CD4-positive, alpha-beta T cell (primary cell): ENCODE measurements at regions of chr14 and their contacts with region 1.

Region 1: DNA sequence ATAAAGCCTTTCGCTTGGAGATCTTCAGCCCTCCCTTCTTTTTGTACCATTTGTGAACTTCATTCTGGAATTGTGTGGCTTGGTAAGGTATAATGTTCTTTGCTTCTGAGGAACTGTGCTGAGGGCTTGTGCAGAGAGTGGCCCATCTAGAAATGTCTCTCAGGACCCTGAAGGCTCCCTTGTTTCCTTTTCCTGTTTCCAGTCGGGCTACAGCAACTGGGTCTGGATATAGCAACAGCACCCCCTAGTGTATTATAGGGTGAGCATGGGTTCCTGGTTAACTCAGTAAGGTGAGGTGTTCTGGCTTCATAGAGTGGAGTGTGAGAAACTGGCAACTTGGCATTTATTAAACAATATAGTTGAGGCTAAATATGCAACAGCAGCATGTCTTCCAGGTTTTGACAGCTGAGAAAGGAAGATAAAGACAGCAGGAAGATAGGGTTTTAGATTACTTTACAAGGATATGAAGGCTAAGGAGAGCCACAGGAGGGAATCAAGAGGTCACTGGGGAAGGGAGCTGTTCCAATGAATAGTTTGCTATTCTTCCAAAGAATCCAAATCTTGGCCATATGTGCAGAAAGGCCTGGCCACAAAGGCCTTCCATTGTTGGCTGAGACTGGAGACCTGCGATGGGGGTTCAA is 49.1 kb upstream of the RNU6-8 start:
- DNase-seq: peak in 13 of 14 experiments; percentile 2 to 80 (median 25)
- ATAC-seq: peak; percentile 94
- H3K4me3 ChIP-seq: no peak overlapping the region
- H3K4me3 Mint-ChIP-seq: no peak overlapping the region
- H3K27ac ChIP-seq: no peak overlapping the region
- H3K27ac Mint-ChIP-seq: no peak overlapping the region
- H3K4me1 ChIP-seq: peaks cover 2% of the 10 kb centered on the region
- H3K4me1 Mint-ChIP-seq: no peaks in the 10 kb centered on the region
- H3K27me3 ChIP-seq: no peaks in the 10 kb centered on the region
- H3K27me3 Mint-ChIP-seq: no peaks in the 10 kb centered on the region
- CTCF ChIP-seq: peak; percentile 92

Region 2: GRCh38 chr14:31510222-31510621 is 741.9 kb before region 1 on chr14:
- CTCF ChIA-PET with region 1: interaction called, 6 read pairs
- POLR2A ChIA-PET with region 1: no interaction called
- intact Hi-C with region 1: loop called (anchors 1 to 2 kb)
- DNase-seq: peak in 3 of 14 experiments; percentile 29 to 36 (median 29)
- ATAC-seq: no peak
- H3K4me3 ChIP-seq: no peak overlapping the region
- H3K4me3 Mint-ChIP-seq: no peak overlapping the region
- H3K27ac ChIP-seq: no peak overlapping the region
- H3K27ac Mint-ChIP-seq: no peak overlapping the region
- H3K4me1 ChIP-seq: no peaks in the 10 kb centered on the region
- H3K4me1 Mint-ChIP-seq: no peaks in the 10 kb centered on the region
- H3K27me3 ChIP-seq: no peaks in the 10 kb centered on the region
- H3K27me3 Mint-ChIP-seq: no peaks in the 10 kb centered on the region
- CTCF ChIP-seq: peak; percentile 73

Region 3: DNA sequence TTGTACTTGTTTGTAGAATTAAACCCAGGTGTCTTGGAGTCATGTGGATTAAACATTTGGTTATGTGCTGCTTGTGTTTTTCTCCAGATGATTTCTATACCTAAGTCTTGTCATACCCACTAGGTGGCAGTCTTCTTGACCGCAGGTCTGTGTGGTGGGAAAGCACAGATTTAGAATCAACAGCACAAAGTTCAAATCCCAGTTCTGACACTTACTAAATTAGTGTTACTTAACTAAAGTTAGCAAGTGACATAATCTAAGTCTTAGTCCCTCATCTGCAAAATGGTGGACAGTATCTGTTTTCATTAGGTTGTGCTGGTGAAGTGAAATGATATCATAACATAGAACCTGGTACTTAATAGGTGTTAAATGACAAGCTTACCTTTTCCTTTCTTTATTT is 326.0 kb before region 1 on chr14:
- CTCF ChIA-PET with region 1: interaction called, 8 read pairs
- POLR2A ChIA-PET with region 1: interaction called, 4 read pairs
- intact Hi-C with region 1: loop called (anchors 1 to 2 kb)
- DNase-seq: peak in 4 of 14 experiments; percentile 23 to 66 (median 64)
- ATAC-seq: peak; percentile 43
- H3K4me3 ChIP-seq: no peak overlapping the region
- H3K4me3 Mint-ChIP-seq: no peak overlapping the region
- H3K27ac ChIP-seq: no peak overlapping the region
- H3K27ac Mint-ChIP-seq: no peak overlapping the region
- H3K4me1 ChIP-seq: no peaks in the 10 kb centered on the region
- H3K4me1 Mint-ChIP-seq: peaks cover 11% of the 10 kb centered on the region
- H3K27me3 ChIP-seq: no peaks in the 10 kb centered on the region
- H3K27me3 Mint-ChIP-seq: no peaks in the 10 kb centered on the region
- CTCF ChIP-seq: peak; percentile 64

Region 4: GRCh38 chr14:32070282-32070681 is 181.9 kb before region 1 on chr14:
- CTCF ChIA-PET with region 1: interaction called, 41 read pairs
- POLR2A ChIA-PET with region 1: interaction called, 8 read pairs
- intact Hi-C with region 1: loop called (anchors 1 kb)
- DNase-seq: no peak
- ATAC-seq: no peak
- H3K4me3 ChIP-seq: no peak overlapping the region
- H3K4me3 Mint-ChIP-seq: no peak overlapping the region
- H3K27ac ChIP-seq: no peak overlapping the region
- H3K27ac Mint-ChIP-seq: no peak overlapping the region
- H3K4me1 ChIP-seq: no peaks in the 10 kb centered on the region
- H3K4me1 Mint-ChIP-seq: peaks cover 7% of the 10 kb centered on the region
- H3K27me3 ChIP-seq: no peaks in the 10 kb centered on the region
- H3K27me3 Mint-ChIP-seq: peaks cover 4% of the 10 kb centered on the region
- CTCF ChIP-seq: no peak

Region 5: DNA sequence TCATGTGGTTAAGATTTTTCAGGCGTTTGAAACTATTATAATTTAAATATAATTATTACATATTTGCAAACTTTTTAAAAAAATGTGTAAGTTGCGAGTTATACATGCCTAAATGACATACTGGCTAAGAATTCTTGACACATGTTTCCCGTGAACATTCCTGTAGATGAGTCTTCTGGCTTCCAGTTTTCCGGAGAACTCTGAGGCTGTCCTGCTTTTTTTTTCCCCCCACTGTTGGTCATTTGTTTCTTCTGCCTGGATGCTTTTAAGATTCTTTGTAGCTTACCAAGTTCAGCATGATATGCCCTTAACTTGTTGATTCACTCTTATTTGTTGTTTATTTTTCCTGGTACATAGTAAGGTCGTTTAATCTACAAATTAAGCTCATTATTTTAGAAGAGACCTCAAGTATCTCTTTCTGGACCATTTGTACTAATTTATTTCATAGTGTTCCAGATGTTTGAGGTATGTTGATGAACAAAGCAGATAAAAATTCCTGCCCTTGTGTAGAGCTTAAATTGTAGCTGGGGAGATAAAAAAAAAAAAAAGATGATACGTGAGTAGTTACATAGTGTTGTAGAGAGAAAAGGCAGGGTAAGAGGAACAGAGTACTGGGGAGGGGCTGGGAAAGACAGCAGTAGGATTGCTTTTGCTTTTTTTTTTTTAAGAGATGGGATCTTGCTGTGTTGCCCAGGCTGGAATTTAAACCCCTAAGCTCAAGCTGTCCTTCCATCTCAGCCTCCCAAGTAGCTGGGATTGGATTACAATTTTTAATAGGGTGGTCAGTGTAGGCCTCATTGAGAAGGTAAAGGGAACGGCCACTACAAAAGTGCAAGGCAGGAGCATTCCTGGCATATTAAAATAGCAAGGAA is 142.2 kb before region 1 on chr14:
- CTCF ChIA-PET with region 1: no interaction called
- POLR2A ChIA-PET with region 1: no interaction called
- intact Hi-C with region 1: no loop called
- DNase-seq: no peak
- ATAC-seq: no peak
- H3K4me3 ChIP-seq: no peak overlapping the region
- H3K4me3 Mint-ChIP-seq: no peak overlapping the region
- H3K27ac ChIP-seq: no peak overlapping the region
- H3K27ac Mint-ChIP-seq: no peak overlapping the region
- H3K4me1 ChIP-seq: no peaks in the 10 kb centered on the region
- H3K4me1 Mint-ChIP-seq: peaks cover 24% of the 10 kb centered on the region
- H3K27me3 ChIP-seq: no peaks in the 10 kb centered on the region
- H3K27me3 Mint-ChIP-seq: no peaks in the 10 kb centered on the region
- CTCF ChIP-seq: no peak

Region 6: DNA sequence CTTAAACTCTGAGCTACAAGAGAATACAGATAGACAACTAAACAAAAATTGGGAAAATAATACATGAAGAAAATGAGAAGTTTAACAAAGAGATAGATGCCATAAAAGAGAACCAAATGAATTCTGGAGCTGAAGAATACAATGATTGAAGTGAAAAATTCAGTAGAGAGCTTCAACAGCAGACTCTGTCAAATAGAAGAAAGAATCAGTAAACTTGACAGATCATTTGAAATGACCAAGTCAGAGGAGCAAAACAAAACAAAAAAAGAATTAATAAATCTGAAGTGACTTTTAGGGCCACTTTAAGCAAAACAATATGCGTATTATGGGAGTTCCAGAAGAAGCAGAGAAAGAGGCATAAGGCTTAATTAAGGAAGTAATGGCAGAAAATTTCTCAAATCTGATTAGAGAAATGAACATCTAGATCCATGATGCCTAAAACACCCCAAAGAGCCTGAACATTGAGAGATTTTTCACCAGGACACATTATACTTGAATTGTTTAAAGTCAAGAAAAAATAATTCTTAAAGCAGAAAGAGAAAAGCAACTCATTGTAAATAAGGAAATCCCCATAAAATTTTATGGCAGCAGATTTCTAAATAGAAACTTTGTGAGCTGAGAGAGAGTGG is 11.9 kb after region 1 on chr14:
- CTCF ChIA-PET with region 1: no interaction called
- POLR2A ChIA-PET with region 1: no interaction called
- intact Hi-C with region 1: no loop called
- DNase-seq: no peak
- ATAC-seq: no peak
- H3K4me3 ChIP-seq: no peak overlapping the region
- H3K4me3 Mint-ChIP-seq: no peak overlapping the region
- H3K27ac ChIP-seq: no peak overlapping the region
- H3K27ac Mint-ChIP-seq: no peak overlapping the region
- H3K4me1 ChIP-seq: no peaks in the 10 kb centered on the region
- H3K4me1 Mint-ChIP-seq: no peaks in the 10 kb centered on the region
- H3K27me3 ChIP-seq: no peaks in the 10 kb centered on the region
- H3K27me3 Mint-ChIP-seq: peaks cover 4% of the 10 kb centered on the region
- CTCF ChIP-seq: no peak